HEK293T (cell line): ENCODE measurements at regions of chr17 and their contacts with region 1.

Region 1: GRCh38 chr17:74770498-74771318 is 5.4 kb downstream of the NAT9 start:
- DNase-seq: peak; percentile 69

Region 2: DNA sequence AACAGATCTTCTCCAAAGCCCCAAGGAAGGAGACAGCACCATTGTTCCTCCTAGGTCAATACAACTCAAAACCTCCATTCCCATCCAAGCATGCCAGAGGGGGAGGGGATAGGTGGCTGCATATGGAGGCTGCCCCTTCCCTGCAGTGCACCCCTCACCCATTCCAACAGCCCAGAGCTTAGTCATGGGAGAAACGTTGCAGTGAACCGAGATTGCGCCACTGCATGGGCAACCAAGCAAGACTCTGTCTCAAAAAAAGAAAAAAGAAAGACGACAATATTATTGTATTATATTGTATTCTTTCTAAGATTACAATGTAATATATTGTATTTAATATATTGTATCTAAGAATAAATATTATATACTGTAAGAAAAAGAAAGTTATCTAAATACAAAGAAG is 110.8 kb before region 1 on chr17:
- CTCF ChIA-PET with region 1: interaction called, 20 read pairs
- POLR2A ChIA-PET with region 1: interaction called, 5 read pairs
- DNase-seq: no peak